CD8-positive, alpha-beta T cell (primary cell): ENCODE measurements at regions of chr3 and their contacts with region 1.

Region 1: GRCh38 chr3:9302425-9303181 is 53.2 kb upstream of the SRGAP3 start:
- DNase-seq: peak; percentile 53 to 85 (median 79)
- ATAC-seq: peak; percentile 98
- H3K4me3 ChIP-seq: no peak overlapping the region
- H3K4me3 Mint-ChIP-seq: no peak overlapping the region
- H3K27ac ChIP-seq: no peak overlapping the region
- H3K27ac Mint-ChIP-seq: no peak overlapping the region
- H3K4me1 ChIP-seq: peaks cover 5% of the 10 kb centered on the region
- H3K4me1 Mint-ChIP-seq: peaks cover 7% of the 10 kb centered on the region
- H3K27me3 ChIP-seq: no peaks in the 10 kb centered on the region
- H3K27me3 Mint-ChIP-seq: peaks cover 12% of the 10 kb centered on the region
- CTCF ChIP-seq: peak; percentile 93

Region 2: DNA sequence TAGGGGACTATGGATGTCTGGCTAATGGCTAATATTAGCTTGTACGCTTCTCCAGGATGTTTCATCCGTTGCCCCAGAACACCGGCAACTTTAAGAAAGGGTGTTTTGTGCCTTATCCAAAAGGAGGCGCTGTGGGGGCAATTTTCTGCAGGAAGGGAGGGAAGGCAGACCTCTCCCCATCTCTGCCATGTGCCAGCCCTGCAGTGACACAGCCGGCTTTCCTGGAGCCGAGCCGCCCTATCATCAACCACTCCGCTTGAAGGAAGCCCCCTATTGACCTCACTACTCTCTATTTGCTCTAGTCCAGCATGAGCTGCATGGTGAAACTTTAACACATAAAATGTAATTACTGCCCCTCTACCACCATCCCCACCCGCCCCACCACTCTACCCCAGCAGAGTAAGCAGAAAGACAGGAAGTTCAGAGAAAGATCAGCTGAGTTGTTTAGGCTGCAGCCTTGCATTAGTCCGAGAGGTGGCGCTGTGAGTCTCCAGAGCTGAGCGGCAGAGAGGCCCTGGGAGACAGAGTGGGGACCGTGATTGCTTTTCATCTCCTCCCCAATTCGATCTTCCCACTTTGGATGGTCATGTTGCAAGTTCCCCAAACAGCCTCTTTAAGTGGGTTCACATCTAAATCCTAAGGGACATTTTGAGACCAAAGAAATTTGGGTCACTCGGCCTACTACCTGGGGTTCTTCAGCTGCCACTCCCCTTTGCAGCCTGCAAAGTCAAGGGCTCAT is 314.8 kb before region 1 on chr3:
- CTCF ChIA-PET with region 1: interaction called, 35 read pairs
- POLR2A ChIA-PET with region 1: no interaction called
- intact Hi-C with region 1: loop called (anchors 1 kb)
- DNase-seq: peak in 8 of 9 experiments; percentile 18 to 67 (median 49)
- ATAC-seq: peak; percentile 95
- H3K4me3 ChIP-seq: no peak overlapping the region
- H3K4me3 Mint-ChIP-seq: peak overlapping the region; percentile 37
- H3K27ac ChIP-seq: no peak overlapping the region
- H3K27ac Mint-ChIP-seq: no peak overlapping the region
- H3K4me1 ChIP-seq: no peaks in the 10 kb centered on the region
- H3K4me1 Mint-ChIP-seq: peaks cover 4% of the 10 kb centered on the region
- H3K27me3 ChIP-seq: no peaks in the 10 kb centered on the region
- H3K27me3 Mint-ChIP-seq: no peaks in the 10 kb centered on the region
- CTCF ChIP-seq: peak; percentile 64

Region 3: DNA sequence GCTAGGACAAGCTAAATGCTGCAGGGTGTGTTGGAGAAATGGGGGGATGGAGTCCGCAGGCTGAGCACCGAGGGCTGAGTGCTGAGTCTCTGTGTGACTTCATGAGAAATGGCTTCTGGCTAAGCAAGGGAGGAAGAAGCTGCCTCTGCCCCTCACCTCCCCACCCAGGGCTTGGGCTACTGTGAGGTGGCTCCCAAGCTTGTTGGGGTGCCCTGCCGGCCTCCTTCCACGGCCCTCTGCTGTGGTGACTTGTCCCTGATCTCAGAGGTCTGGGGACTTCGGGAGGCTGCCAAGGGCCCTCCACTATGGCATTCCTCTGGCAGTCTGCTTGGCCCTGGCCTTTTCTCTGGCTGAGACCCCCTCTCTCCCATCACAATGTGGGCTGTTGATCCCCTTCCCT is 309.3 kb before region 1 on chr3:
- CTCF ChIA-PET with region 1: interaction called, 35 read pairs
- POLR2A ChIA-PET with region 1: no interaction called
- intact Hi-C with region 1: loop called (anchors 1 kb)
- DNase-seq: no peak
- ATAC-seq: no peak
- H3K4me3 ChIP-seq: no peak overlapping the region
- H3K4me3 Mint-ChIP-seq: no peak overlapping the region
- H3K27ac ChIP-seq: no peak overlapping the region
- H3K27ac Mint-ChIP-seq: no peak overlapping the region
- H3K4me1 ChIP-seq: no peaks in the 10 kb centered on the region
- H3K4me1 Mint-ChIP-seq: no peaks in the 10 kb centered on the region
- H3K27me3 ChIP-seq: no peaks in the 10 kb centered on the region
- H3K27me3 Mint-ChIP-seq: no peaks in the 10 kb centered on the region
- CTCF ChIP-seq: no peak

Region 4: DNA sequence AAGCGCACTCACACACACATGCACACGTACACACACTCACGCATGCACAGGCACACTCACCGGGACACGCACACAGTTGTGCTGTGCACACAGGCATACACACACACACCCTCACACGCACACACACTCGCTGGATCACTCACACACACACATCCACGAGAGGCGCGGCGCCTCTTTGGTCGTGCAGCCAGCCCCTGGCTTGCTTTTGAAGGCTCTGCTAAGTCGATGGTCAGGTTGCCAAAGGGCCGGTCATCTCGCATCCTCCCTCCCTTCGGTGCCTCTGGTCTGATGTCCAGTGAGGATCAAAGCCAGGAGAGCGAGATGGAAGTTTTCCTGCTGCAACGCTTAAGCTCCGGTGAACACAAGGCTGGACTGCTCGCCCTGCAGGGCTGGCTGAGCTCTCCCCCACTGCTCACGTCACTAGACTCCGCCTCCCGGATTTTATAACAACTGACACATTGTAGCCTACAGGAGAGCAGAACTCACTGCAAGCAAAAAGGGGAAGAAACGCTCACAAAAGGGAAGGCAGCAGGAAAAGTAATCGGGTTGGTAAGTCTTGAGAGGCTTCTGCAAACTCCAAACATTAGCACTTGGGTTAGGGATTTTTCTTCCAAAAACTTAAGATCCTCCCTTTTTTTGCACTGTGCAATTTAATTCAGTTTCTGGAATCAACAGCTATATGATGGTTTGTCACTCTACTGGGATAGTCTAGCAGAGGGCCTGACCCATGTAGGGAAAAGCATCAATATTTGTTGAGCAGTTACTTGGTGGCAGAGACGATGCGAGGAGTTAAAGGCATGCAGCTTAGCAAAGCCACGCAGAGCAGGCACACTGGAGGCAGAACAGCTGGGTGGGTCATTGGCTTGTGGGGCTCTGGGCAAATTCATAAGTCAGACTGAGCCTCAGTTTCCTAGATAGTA is 53.1 kb before region 1 on chr3 and contains the start of gene SRGAP3:
- CTCF ChIA-PET with region 1: interaction called, 4 read pairs
- POLR2A ChIA-PET with region 1: no interaction called
- intact Hi-C with region 1: loop called in 1 of 2 experiments (anchors 2 kb)
- DNase-seq: peak; percentile 53 to 87 (median 77)
- ATAC-seq: peak; percentile 99
- H3K4me3 ChIP-seq: peak within 1 kb of the TSS; percentile 58 to 65
- H3K4me3 Mint-ChIP-seq: peak within 1 kb of the TSS; percentile 91
- H3K27ac ChIP-seq: no peak within 1 kb of the TSS
- H3K27ac Mint-ChIP-seq: peak within 1 kb of the TSS; percentile 75
- H3K4me1 ChIP-seq: peaks cover 5% of the 10 kb centered on the region
- H3K4me1 Mint-ChIP-seq: peaks cover 24% of the 10 kb centered on the region
- H3K27me3 ChIP-seq: no peaks in the 10 kb centered on the region
- H3K27me3 Mint-ChIP-seq: peaks cover 6% of the 10 kb centered on the region
- CTCF ChIP-seq: peak; percentile 28
- total RNA-seq, gene SRGAP3: 2.2 to 2.3 TPM

Region 5: DNA sequence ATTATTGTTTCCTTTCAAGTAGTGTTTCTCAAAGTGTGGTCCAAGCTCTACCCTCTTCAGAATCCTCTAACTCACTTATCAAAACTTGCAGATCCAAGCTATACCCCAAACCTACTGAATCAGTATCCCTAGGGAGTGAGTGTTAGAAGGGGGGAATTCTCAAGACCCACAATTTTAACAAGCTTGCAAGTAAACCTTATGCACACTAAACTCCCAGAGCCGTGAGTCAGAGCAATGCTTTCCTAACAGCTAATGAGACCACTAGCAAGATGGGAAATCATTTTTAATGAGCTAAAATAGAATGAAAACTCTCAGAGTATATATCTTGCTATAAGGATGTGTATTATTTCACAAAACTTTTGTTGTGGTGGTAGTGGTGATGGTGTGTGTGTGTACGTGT is 12.0 kb before region 1 on chr3:
- CTCF ChIA-PET with region 1: interaction called, 14 read pairs
- POLR2A ChIA-PET with region 1: no interaction called
- intact Hi-C with region 1: no loop called
- DNase-seq: no peak
- ATAC-seq: no peak
- H3K4me3 ChIP-seq: no peak overlapping the region
- H3K4me3 Mint-ChIP-seq: no peak overlapping the region
- H3K27ac ChIP-seq: no peak overlapping the region
- H3K27ac Mint-ChIP-seq: no peak overlapping the region
- H3K4me1 ChIP-seq: no peaks in the 10 kb centered on the region
- H3K4me1 Mint-ChIP-seq: no peaks in the 10 kb centered on the region
- H3K27me3 ChIP-seq: no peaks in the 10 kb centered on the region
- H3K27me3 Mint-ChIP-seq: peaks cover 29% of the 10 kb centered on the region
- CTCF ChIP-seq: no peak

Region 6: DNA sequence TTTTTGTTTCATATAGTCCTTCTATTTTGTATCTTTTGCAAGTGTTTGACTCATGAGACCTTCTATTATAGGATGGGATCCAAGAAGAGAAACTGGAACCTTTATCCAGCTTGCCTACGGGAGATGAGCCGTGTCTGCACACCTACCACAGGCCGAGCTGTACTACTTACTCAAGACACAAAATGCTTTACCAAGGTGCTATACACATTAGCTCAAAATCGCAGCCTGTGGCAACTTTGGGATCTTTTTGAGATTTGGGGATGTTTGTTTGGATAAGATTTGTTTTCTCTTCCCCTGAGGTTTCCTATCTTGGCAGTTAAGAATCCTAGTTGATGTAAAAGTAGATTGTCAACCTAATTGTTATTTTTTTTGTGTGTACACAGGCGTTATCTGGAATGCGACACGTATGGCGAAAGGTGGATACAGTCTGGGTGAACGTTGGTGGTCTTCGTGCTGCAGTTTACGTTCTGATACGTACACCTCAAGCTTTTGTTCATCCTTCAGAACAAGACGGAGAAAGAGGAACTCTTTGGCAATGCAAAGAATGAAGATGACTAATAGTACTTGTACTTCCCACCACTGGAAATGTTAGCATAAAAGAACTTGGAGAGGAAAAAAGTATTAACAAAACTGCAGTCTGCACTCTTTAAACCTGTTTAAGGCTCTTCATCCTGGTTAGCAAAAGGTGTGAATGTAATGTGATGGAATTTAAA is 81.7 kb after region 1 on chr3:
- CTCF ChIA-PET with region 1: no interaction called
- POLR2A ChIA-PET with region 1: no interaction called
- intact Hi-C with region 1: no loop called
- DNase-seq: no peak
- ATAC-seq: no peak
- H3K4me3 ChIP-seq: no peak overlapping the region
- H3K4me3 Mint-ChIP-seq: no peak overlapping the region
- H3K27ac ChIP-seq: no peak overlapping the region
- H3K27ac Mint-ChIP-seq: peak overlapping the region; percentile 37
- H3K4me1 ChIP-seq: peaks cover 4% of the 10 kb centered on the region
- H3K4me1 Mint-ChIP-seq: peaks cover 34% of the 10 kb centered on the region
- H3K27me3 ChIP-seq: no peaks in the 10 kb centered on the region
- H3K27me3 Mint-ChIP-seq: no peaks in the 10 kb centered on the region
- CTCF ChIP-seq: no peak

Region 7: DNA sequence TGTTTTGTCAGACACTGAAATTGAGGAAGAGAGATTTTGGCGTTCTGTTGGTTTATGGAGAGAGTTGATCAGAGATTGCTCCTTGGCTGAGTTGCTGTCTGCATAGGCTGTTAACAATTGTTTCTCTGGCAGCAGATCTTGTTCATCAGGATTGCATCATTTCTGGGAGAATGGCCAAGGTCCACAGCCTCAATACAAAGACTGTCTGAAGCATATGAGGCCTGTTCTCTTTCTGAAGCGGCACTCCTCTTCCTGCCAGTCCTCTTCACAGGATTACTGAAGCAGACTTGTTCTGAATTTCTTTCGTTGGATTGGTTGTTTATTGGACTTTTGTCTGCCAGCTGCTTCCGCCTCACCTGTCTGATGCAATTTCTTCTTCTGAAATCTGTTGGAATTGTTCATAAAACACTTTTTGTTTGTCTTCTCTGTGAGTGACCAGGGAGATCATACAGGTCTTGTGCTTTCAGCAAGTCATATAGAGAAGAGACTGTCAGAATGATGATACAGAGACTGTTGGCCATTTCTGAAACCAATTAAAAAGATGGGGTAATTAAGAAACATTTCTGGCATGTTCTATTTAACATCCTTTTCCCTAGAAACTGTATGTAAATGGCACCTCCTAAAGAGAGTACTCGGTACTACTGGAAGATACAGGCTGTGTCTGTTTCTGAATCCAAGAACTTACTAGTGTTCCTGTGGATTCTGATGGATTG is 120.3 kb after region 1 on chr3:
- CTCF ChIA-PET with region 1: no interaction called
- POLR2A ChIA-PET with region 1: no interaction called
- intact Hi-C with region 1: no loop called
- DNase-seq: peak in 2 of 9 experiments; percentile 53 to 67
- ATAC-seq: peak; percentile 93
- H3K4me3 ChIP-seq: no peak overlapping the region
- H3K4me3 Mint-ChIP-seq: no peak overlapping the region
- H3K27ac ChIP-seq: peak overlapping the region in 1 of 2 experiments; percentile 38
- H3K27ac Mint-ChIP-seq: peak overlapping the region; percentile 86
- H3K4me1 ChIP-seq: peaks cover 6% of the 10 kb centered on the region
- H3K4me1 Mint-ChIP-seq: peaks cover 54% of the 10 kb centered on the region
- H3K27me3 ChIP-seq: no peaks in the 10 kb centered on the region
- H3K27me3 Mint-ChIP-seq: no peaks in the 10 kb centered on the region
- CTCF ChIP-seq: peak; percentile 73

Region 8: DNA sequence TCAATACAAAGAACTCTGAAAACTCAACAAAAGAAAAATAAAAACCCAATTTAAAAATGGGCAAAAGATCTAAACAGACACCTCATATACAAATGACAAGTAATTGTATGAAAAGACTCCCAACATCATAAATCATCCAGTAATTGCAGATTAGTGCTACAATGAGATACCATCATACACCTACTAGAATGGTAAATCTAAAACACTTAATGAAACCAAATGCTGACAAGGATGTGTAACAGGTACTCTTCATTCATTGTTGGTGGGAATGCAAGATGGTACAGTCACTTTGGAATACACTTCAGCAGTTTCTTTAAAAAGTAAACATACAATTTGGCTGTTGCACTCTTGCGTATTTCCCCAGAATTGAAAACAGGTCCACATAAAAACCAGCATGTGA is 182.6 kb after region 1 on chr3:
- CTCF ChIA-PET with region 1: no interaction called
- POLR2A ChIA-PET with region 1: no interaction called
- intact Hi-C with region 1: no loop called
- DNase-seq: no peak
- ATAC-seq: no peak
- H3K4me3 ChIP-seq: no peak overlapping the region
- H3K4me3 Mint-ChIP-seq: no peak overlapping the region
- H3K27ac ChIP-seq: no peak overlapping the region
- H3K27ac Mint-ChIP-seq: peak overlapping the region; percentile 28
- H3K4me1 ChIP-seq: no peaks in the 10 kb centered on the region
- H3K4me1 Mint-ChIP-seq: no peaks in the 10 kb centered on the region
- H3K27me3 ChIP-seq: no peaks in the 10 kb centered on the region
- H3K27me3 Mint-ChIP-seq: no peaks in the 10 kb centered on the region
- CTCF ChIP-seq: no peak

Region 9: DNA sequence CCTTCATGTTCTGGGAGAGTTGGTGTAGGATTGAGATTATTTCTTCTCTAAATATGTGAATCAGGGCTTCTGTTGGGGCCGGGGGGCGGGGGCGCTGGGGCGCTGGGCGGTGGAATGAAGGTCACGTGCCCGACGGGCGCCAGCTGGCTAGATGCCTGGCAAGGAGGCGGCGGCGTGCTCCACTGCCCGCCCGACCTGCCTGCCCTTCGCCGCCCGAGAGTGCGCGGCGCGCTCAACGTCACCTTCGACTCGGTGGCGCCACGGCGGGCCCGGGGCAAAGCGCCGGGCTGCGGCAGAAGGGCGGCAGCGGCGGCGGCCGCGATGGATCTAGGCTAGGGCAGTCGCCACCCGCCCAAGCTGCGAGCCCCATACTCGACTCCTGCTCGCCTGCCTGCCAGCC is 298.0 kb after region 1 on chr3:
- CTCF ChIA-PET with region 1: no interaction called
- POLR2A ChIA-PET with region 1: no interaction called
- intact Hi-C with region 1: no loop called
- DNase-seq: no peak
- ATAC-seq: no peak
- H3K4me3 ChIP-seq: no peak overlapping the region
- H3K4me3 Mint-ChIP-seq: peak overlapping the region; percentile 45
- H3K27ac ChIP-seq: no peak overlapping the region
- H3K27ac Mint-ChIP-seq: no peak overlapping the region
- H3K4me1 ChIP-seq: no peaks in the 10 kb centered on the region
- H3K4me1 Mint-ChIP-seq: peaks cover 2% of the 10 kb centered on the region
- H3K27me3 ChIP-seq: peaks cover 3 to 4% of the 10 kb centered on the region in 2 experiments
- H3K27me3 Mint-ChIP-seq: peaks cover 48% of the 10 kb centered on the region
- CTCF ChIP-seq: no peak